Activated T-helper 1 cell treated with anti-CD3 and anti-CD28 coated beads, Interleukin-12 subunit alpha, Interleukin-12 subunit beta, Interleukin-2, Interleukin-4 antibody, amounts not matched to agents 30 ng/mL and 10 ng/mL and 1 ng/mL, durations not matched to agents 14 hours and 24 hours and 36 hours (primary cell): ENCODE measurements at regions of chrX and their contacts with region 1.

Region 1: GRCh38 chrX:103464774-103465117 is 54.5 kb downstream of the RAB40A start:
- DNase-seq: peak; percentile 55
- H3K4me3 Mint-ChIP-seq: peak overlapping the region; percentile 93
- H3K27ac Mint-ChIP-seq: peak overlapping the region; percentile 58
- H3K4me1 Mint-ChIP-seq: peaks cover 22% of the 10 kb centered on the region
- H3K27me3 Mint-ChIP-seq: peaks cover 9% of the 10 kb centered on the region

Region 2: GRCh38 chrX:101785142-101785541 is 1679.6 kb before region 1 on chrX:
- intact Hi-C with region 1: no loop called
- DNase-seq: no peak
- H3K4me3 Mint-ChIP-seq: no peak overlapping the region
- H3K27ac Mint-ChIP-seq: no peak overlapping the region
- H3K4me1 Mint-ChIP-seq: no peaks in the 10 kb centered on the region
- H3K27me3 Mint-ChIP-seq: peaks cover 2% of the 10 kb centered on the region

Region 3: GRCh38 chrX:102950908-102951866 is 513.6 kb before region 1 on chrX:
- intact Hi-C with region 1: loop called (anchors 5 kb)
- DNase-seq: peak; percentile 15
- H3K4me3 Mint-ChIP-seq: no peak overlapping the region
- H3K27ac Mint-ChIP-seq: no peak overlapping the region
- H3K4me1 Mint-ChIP-seq: peaks cover 5% of the 10 kb centered on the region
- H3K27me3 Mint-ChIP-seq: peaks cover 4% of the 10 kb centered on the region

Region 4: DNA sequence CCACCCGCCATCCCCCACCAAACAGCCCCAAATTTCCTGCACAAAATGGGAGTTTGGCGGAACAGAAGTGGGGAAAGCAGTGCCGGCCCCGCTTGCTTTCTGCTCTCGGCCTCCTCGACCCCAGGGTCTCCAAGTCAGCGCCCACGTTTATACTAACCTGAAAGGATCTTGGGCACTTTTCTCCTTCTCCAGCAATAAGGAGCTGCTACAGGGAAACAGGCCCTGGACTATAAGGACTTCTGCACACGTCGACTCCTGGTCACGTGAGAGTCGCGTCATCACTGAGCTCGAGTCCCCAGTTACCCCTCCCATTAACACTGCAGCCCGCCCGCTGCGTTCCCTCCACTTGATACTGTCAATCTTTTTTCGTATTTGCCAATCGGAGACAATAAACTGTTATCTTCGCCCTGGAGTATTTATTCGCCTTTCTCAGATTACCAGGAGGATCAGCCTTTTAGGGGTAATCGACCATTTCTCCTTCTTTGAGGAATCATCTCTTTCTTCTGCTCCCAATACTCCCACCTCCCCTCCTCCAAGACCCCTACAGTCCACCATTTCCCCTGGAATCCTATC is 209.7 kb before region 1 on chrX and contains the start of gene TCEAL8:
- intact Hi-C with region 1: loop called (anchors 2 kb)
- DNase-seq: peak; percentile 32
- H3K4me3 Mint-ChIP-seq: peak within 1 kb of the TSS; percentile 98
- H3K27ac Mint-ChIP-seq: peak within 1 kb of the TSS; percentile 92
- H3K4me1 Mint-ChIP-seq: peaks cover 25% of the 10 kb centered on the region
- H3K27me3 Mint-ChIP-seq: peaks cover 8% of the 10 kb centered on the region
- total RNA-seq, gene TCEAL8: 20.7 and 21.9 TPM in 2 replicates

Region 5: DNA sequence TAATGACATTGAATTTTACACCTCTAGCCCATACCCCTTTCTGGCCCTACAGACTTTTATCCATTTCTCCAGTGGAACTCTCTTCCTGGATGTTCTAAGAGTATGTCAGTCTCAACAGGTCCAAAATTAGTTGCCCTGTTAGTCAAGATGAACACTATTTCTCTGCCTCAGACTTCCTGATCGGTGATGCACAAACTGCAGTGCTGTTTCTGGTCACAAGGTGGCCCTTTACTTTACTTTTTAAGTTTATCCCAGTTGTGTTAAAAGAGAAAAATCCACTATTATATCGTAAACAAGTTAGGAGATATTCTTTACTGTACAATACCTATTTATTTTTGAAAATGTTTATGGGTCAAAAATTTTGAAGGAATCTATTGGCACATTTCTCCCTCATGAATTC is 121.6 kb before region 1 on chrX:
- intact Hi-C with region 1: loop called (anchors 1 kb)
- DNase-seq: no peak
- H3K4me3 Mint-ChIP-seq: no peak overlapping the region
- H3K27ac Mint-ChIP-seq: no peak overlapping the region
- H3K4me1 Mint-ChIP-seq: no peaks in the 10 kb centered on the region
- H3K27me3 Mint-ChIP-seq: peaks cover 5% of the 10 kb centered on the region